ENCODE measurements at regions of chr6 and their contacts with region 1.

Region 1: DNA sequence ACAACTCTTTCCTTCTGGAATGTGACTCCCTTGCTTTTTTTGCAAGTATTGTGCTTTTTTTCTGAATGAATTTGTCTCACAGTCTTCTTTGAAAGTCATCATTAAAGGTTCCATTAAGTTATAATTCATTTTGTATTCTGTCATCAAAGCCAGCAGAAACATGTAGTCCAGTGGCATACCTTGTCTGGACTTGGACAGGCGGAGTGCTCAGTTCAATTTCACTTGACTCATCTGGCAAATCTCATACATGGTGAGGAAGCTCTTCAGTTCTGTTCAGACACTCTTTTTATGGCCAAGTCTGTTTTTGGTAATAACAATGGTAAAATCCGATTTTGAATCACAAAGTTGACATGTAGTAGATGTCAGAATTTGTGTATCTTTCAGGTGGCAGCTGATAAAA is 260.8 kb upstream of the OPRM1 start:
- DNase-seq: no peak
- ATAC-seq: no peak
- H3K4me3 ChIP-seq: no peak overlapping the region
- H3K27ac ChIP-seq: no peak overlapping the region
- H3K4me1 ChIP-seq: peaks cover 0 to 2% of the 10 kb centered on the region in 2 donors
- H3K27me3 ChIP-seq: no peaks in the 10 kb centered on the region

Region 2: DNA sequence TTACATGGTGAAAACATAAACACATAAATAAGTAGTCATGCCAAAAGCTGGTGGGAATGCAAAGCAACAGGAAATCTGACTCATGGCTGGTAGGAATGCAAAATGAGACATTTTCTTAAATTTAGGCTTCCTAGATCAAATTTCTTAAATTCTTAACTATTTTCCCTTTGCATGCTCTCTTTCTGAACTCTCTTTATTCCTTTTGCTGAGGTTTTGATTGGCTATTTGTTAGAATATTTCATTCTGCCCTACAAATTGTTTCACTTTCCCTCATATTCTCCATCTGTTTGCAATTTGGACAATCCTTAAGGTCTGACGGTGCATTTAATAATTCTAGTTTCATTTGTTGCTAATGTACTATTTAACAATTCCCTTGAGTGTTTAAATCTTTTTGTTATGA is 209.6 kb before region 1 on chr6:
- intact Hi-C with region 1: loop called in 1 of 2 experiments (anchors 10 kb)
- DNase-seq: no peak
- ATAC-seq: no peak
- H3K4me3 ChIP-seq: no peak overlapping the region
- H3K27ac ChIP-seq: no peak overlapping the region
- H3K4me1 ChIP-seq: peaks cover 1 to 5% of the 10 kb centered on the region in 2 donors
- H3K27me3 ChIP-seq: no peaks in the 10 kb centered on the region

Region 3: DNA sequence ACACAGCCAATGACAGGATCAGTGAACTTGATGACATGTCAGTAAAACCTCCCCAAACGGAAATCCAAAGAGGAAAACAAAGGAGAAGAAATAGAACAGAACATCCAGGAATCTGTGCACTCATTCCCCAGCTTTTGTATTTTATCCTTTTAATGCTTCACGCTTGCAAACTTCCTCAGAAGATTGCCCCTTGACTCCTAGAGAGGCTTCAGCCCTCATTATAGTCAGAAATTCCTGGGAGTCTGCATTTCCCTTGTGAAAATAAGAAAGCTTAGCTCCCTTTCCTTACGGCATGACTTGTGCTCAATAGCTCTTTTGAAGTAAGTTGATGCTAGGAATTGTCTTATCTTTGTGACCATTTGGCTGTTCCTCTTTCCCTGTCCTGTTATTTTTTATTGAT is 52.8 kb before region 1 on chr6:
- intact Hi-C with region 1: loop called in 1 of 2 experiments (anchors 2 kb)
- DNase-seq: no peak
- ATAC-seq: no peak
- H3K4me3 ChIP-seq: no peak overlapping the region
- H3K27ac ChIP-seq: no peak overlapping the region
- H3K4me1 ChIP-seq: peaks cover 0 to 1% of the 10 kb centered on the region in 2 donors
- H3K27me3 ChIP-seq: no peaks in the 10 kb centered on the region

Region 4: DNA sequence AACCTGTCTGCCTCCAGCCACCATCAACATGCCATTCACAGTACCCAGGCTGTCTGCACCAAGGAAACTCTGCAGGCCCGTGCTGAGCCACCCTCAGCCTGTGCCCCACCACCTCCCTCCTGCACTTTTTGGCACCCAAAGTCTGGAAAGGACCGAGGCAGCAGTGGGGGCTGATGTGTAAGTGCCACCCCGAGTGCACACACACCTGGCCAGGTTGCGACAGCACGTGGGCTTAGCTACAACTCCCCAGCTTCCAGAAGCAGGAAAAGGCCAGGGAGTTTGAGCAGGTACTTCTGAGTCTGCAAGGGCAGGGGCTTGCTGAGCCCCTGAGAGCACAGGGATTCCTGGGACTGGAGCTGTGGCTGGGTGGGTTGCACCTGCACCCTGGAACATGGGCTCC is 42.5 kb before region 1 on chr6:
- intact Hi-C with region 1: no loop called
- DNase-seq: no peak
- ATAC-seq: no peak
- H3K4me3 ChIP-seq: no peak overlapping the region
- H3K27ac ChIP-seq: no peak overlapping the region
- H3K4me1 ChIP-seq: no peaks in the 10 kb centered on the region
- H3K27me3 ChIP-seq: no peaks in the 10 kb centered on the region

Measured in aorta (tissue), 5 donors.